A549 (cell line): ENCODE measurements at regions of chr6 and their contacts with region 1.

Region 1: GRCh38 chr6:84422380-84422968 is 195.0 kb upstream of the CEP162 start:
- DNase-seq: peak; percentile 18 to 64
- ATAC-seq: peak; percentile 97 to 99
- H3K4me3 ChIP-seq: peak overlapping the region; percentile 14; the same call in 1 of the 3 replicates
- H3K27ac ChIP-seq: no peak overlapping the region
- H3K4me1 ChIP-seq: no peaks in the 10 kb centered on the region
- CTCF ChIP-seq: peak; percentile 72
- EP300 ChIP-seq: no peak
- POLR2A ChIP-seq: no peak
- RAD21 ChIP-seq: peak; percentile 86

Region 2: DNA sequence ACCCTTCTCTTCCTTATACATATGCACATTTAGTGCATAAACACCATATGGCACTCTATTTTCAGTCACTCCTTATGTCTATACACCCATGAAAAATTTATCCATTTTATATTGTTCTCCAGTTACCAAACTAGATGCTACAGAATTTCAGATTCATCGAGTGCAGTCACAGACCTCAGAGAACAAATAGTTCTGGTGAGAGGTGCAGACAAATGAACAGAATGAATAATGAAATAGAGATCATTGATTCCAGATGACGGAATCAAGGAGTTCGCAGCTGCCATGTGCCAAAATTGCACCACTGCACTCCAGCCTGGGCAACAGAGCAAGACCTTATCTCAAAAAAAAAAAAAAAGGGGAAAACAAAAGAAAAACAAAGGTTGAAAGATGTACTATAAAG is 19.7 kb after region 1 on chr6:
- CTCF ChIA-PET with region 1: interaction called, 10 read pairs
- POLR2A ChIA-PET with region 1: no interaction called
- DNase-seq: no peak
- ATAC-seq: no peak
- H3K4me3 ChIP-seq: no peak overlapping the region
- H3K27ac ChIP-seq: no peak overlapping the region
- H3K4me1 ChIP-seq: no peaks in the 10 kb centered on the region
- CTCF ChIP-seq: no peak
- EP300 ChIP-seq: no peak
- POLR2A ChIP-seq: no peak
- RAD21 ChIP-seq: no peak

Region 3: GRCh38 chr6:84568971-84569370 is 146.5 kb after region 1 on chr6:
- CTCF ChIA-PET with region 1: interaction called, 17 read pairs
- POLR2A ChIA-PET with region 1: no interaction called
- DNase-seq: peak in 1 of 2 experiments; percentile 48
- ATAC-seq: peak in 1 of 2 experiments; percentile 66; a peak in 3 of 6 replicates
- H3K4me3 ChIP-seq: no peak overlapping the region
- H3K27ac ChIP-seq: no peak overlapping the region
- H3K4me1 ChIP-seq: no peaks in the 10 kb centered on the region
- CTCF ChIP-seq: peak; percentile 44
- EP300 ChIP-seq: no peak
- POLR2A ChIP-seq: no peak
- RAD21 ChIP-seq: peak; percentile 69 to 73

Region 4: DNA sequence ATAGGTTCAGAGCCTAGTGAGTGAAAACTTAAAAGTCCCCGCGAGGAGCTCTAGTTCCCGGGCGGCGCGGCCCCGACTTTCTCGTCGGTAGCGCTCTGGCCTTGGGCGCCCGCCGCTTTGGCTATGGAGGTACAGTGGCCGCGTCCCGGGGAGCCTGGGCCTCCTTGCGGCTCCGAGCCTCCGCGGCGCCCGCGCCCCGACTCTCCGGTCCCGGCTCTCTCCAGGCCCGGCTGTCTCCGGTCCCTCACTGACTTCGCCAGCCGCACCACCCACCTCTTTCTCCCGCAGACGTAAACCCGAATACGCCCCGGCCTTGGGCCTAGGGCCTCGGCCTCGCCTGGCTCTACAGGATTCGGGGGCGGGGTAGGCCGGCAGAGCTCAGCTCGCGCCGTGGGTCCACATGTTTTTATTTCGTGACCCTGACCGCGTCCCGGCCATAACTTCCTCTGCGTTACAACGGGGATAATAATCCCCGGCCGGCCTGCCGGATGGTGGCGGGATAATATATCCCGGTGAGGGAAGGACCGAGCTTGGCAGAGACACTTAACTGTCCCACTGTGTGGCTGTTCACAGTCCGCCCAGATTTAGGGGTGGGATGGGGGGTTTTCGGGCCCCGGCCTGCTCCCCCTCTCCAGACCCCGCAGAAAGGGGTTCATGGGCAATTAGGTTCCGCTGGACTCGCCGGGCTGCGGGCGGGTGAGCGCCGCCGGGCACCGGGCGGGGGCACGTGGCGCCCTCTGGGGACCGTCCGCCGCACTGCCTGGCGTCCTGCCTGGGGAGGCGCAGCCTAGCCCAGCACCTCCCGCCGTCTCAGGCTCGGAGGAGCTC is 351.9 kb after region 1 on chr6:
- CTCF ChIA-PET with region 1: interaction called, 25 read pairs
- POLR2A ChIA-PET with region 1: no interaction called
- DNase-seq: peak; percentile 41 to 80
- ATAC-seq: peak; percentile 75 to 89
- H3K4me3 ChIP-seq: peak overlapping the region; percentile 53
- H3K27ac ChIP-seq: peak overlapping the region; percentile 73 to 99
- H3K4me1 ChIP-seq: peaks cover 8% of the 10 kb centered on the region; the same call in 1 of the 3 replicates
- CTCF ChIP-seq: peak; percentile 72
- EP300 ChIP-seq: no peak
- POLR2A ChIP-seq: no peak
- RAD21 ChIP-seq: peak; percentile 40 to 69; a peak in 4 of 5 replicates

Region 5: DNA sequence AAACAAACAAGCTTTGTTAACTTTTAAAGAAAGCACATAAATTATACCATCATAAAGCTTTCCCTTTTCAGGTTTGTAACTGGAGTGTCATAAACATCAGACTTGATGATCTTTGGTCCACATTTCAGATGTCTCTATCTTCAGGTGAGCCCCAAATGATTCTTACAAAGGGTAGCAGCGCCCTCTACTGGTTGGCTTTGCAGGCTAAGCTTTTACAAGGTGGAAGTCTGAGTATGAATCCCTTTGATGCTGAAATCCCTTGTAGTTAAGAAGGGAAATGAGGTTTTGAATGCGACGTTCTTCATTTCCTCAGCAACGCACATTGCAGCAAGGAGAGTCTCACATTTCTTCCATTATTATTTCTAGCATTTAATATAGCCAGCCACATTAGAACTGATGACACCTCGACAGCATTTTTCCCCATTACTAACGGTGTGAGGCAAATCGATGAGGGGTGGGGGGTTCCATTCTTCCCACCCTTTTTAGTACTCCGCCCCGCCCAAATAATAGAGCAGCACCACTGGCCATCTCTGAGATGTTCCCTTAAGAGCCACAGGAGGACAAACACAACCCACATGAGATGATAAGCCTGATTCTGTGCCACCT is 901.1 kb after region 1 on chr6:
- CTCF ChIA-PET with region 1: interaction called, 14 read pairs
- POLR2A ChIA-PET with region 1: no interaction called
- DNase-seq: peak; percentile 11 to 80
- ATAC-seq: peak; percentile 86 to 96; a peak in 5 of 6 replicates
- H3K4me3 ChIP-seq: no peak overlapping the region
- H3K27ac ChIP-seq: no peak overlapping the region
- H3K4me1 ChIP-seq: no peaks in the 10 kb centered on the region
- CTCF ChIP-seq: peak; percentile 80
- EP300 ChIP-seq: no peak
- POLR2A ChIP-seq: no peak
- RAD21 ChIP-seq: peak; percentile 84 to 86